Gastrocnemius medialis (tissue), 4 donors: ENCODE measurements at regions of chr2 and their contacts with region 1.

Region 1: GRCh38 chr2:170815746-170816503 is 762 bp upstream of the GAD1 start:
- DNase-seq: no peak
- ATAC-seq: peak in 1 of 2 donors; percentile 32
- H3K4me3 ChIP-seq: peak overlapping the region; percentile 42 to 62 (median 48)
- H3K27ac ChIP-seq: no peak overlapping the region
- H3K4me1 ChIP-seq: peaks cover 54 to 62% of the 10 kb centered on the region in 2 donors
- H3K27me3 ChIP-seq: peaks cover 81 to 82% (median 81%) of the 10 kb centered on the region in 3 donors
- CTCF ChIP-seq: peak; percentile 55 to 82 (median 76)
- POLR2A ChIP-seq: no peak

Region 2: DNA sequence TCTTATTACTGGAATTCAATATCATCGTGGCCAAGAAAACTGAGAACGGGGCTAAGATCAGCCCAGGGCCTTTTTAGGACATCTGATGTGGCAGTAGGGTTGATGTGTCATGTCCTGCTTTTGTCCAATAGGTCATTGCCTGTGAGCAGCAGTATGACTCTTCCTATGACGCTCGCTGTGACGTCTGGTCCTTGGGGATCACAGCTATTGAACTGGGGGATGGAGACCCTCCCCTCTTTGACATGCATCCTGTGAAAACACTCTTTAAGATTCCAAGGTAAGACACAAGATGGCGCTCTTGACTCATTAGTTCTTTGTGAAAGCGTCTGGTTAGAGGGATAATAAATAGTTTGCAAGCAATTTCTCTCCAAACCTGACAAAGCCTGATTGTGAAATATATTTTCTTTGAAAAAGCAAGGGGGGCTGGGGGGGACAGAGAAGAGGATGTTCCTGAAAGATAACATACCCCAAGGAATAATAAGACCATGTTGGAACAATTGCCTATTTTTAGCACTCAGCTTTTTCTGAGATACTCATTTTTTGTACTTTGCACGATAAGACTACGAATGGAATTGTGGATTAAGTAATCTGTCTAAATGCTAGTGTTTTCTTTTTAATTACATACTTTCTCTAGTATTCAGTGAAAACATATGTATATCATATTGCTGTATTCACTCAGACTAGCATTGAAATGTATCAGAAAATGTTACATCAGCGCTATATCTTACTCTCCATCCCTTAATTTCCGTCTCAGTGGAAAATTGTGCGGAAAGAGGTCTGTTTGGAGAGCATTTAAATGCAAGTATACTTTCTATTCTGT is 579.9 kb before region 1 on chr2:
- in situ Hi-C with region 1: loop called in 2 of 4 experiments (anchors 10 to 25 kb)
- intact Hi-C with region 1: loop called (anchors 1 kb)
- DNase-seq: no peak
- ATAC-seq: peak in 1 of 2 donors; percentile 54
- H3K4me3 ChIP-seq: no peak overlapping the region
- H3K27ac ChIP-seq: no peak overlapping the region
- H3K4me1 ChIP-seq: no peaks in the 10 kb centered on the region
- H3K27me3 ChIP-seq: peaks cover 0 to 5% (median 3%) of the 10 kb centered on the region in 3 donors
- CTCF ChIP-seq: peak in 3 of 5 experiments; percentile 50 to 55 (median 52)
- POLR2A ChIP-seq: no peak

Region 3: DNA sequence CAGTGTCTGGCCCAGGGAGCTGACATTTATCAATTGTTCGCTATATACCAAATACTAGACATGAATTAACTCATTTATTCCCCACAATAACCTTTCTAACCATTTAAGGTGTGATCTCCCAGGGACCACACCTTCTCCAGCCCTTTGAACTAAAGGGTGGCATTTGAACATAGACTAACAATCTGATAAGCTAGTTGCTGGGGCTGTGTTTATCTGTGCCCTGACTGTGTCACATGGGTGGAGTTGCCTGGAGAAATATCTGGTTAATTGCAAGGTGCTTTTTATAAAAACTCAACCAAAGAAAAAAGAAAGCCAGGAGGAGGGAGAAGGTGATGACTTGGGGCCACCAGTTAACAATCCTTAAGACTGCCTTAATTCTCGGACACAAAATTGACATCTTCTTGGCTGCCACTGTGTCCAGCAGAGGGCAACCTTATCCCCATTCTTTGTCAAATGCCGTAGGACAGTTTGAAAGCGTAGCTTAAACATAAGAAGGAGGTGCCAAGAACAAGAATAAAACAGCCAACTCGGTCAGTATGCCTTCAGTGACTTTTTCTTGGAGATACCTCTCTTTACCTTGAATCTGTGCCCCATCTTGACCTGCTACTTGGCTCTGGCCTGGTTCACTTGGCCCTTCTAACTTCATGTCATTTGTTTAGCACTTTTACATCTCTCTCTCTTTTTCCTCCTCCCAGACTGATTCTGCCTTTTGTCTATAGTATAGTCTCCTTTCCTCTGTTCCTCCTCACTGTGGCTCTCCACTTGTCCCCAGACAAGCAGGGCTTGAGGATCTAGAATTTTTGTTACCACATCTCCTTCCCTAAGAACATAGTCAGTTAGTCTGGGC is 454.6 kb before region 1 on chr2:
- in situ Hi-C with region 1: loop called in 1 of 4 experiments (anchors 10 kb)
- intact Hi-C with region 1: loop called (anchors 5 kb)
- DNase-seq: peak in 1 of 2 donors; percentile 6
- ATAC-seq: peak; percentile 47 to 53
- H3K4me3 ChIP-seq: no peak overlapping the region
- H3K27ac ChIP-seq: no peak overlapping the region
- H3K4me1 ChIP-seq: no peaks in the 10 kb centered on the region
- H3K27me3 ChIP-seq: peaks cover 0 to 3% (median 0%) of the 10 kb centered on the region in 3 donors
- CTCF ChIP-seq: peak in 4 of 5 experiments; percentile 10 to 60 (median 46)
- POLR2A ChIP-seq: no peak

Region 4: DNA sequence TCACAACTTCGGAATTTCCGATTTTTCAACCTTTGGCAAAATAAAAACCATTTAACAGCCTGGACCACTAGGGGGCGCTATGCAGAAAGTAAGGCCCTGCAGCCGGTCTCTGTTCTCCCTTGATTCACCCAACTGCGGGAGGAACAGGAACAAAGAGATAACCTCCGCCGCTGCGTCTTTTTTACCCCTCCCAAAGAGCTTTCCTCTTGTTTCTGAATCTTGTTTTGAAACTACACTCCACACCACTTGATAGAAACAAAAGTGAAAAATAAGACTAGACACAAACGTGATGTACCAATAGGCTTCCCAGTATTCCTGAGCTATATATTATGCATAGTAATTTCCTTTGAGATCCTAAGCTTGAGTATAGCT is 406.8 kb before region 1 on chr2:
- in situ Hi-C with region 1: loop called in 2 of 4 experiments (anchors 25 kb)
- intact Hi-C with region 1: loop called (anchors 1 kb)
- DNase-seq: peak; percentile 24 to 38
- ATAC-seq: peak in 1 of 2 donors; percentile 53
- H3K4me3 ChIP-seq: peak overlapping the region in 1 of 4 donors; percentile 18
- H3K27ac ChIP-seq: no peak overlapping the region
- H3K4me1 ChIP-seq: no peaks in the 10 kb centered on the region
- H3K27me3 ChIP-seq: peaks cover 0 to 2% (median 0%) of the 10 kb centered on the region in 3 donors
- CTCF ChIP-seq: peak; percentile 70 to 82 (median 77)
- POLR2A ChIP-seq: no peak

Region 5: DNA sequence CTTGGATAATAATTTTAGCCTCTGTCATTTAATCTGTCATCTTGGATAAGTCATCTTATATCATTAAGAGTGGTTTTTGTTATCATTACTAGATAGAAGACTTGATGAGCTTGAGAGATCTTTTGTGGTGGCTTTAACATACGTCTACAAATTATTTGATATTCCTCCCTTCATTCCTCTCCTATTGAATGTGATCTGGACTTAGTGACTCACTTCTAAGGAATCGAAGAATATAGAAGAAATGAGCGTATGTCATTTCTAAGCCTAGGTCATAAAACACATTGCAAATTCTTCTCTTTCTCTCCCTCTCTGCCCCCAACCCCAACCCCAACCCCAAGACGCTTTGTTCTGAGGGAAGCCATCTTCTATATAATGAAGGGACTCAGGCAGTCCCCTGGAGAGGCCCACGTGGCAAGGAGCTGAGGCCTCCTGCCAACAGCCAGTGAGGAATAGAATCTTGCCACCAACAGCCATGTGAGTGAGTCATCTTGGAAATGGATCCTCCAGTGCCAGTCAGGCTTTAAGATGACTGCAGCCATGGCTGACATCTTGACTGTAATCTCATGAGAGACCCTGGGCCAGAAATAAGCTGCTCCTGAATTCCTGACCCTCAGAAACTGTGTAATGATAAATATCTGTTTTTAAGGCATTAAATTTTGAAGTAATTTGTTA is 322.4 kb before region 1 on chr2:
- in situ Hi-C with region 1: loop called in 2 of 4 experiments (anchors 5 to 25 kb)
- intact Hi-C with region 1: no loop called
- DNase-seq: peak; percentile 21 to 22
- ATAC-seq: peak; percentile 66 to 69
- H3K4me3 ChIP-seq: no peak overlapping the region
- H3K27ac ChIP-seq: no peak overlapping the region
- H3K4me1 ChIP-seq: no peaks in the 10 kb centered on the region
- H3K27me3 ChIP-seq: no peaks in the 10 kb centered on the region
- CTCF ChIP-seq: no peak
- POLR2A ChIP-seq: no peak

Region 6: DNA sequence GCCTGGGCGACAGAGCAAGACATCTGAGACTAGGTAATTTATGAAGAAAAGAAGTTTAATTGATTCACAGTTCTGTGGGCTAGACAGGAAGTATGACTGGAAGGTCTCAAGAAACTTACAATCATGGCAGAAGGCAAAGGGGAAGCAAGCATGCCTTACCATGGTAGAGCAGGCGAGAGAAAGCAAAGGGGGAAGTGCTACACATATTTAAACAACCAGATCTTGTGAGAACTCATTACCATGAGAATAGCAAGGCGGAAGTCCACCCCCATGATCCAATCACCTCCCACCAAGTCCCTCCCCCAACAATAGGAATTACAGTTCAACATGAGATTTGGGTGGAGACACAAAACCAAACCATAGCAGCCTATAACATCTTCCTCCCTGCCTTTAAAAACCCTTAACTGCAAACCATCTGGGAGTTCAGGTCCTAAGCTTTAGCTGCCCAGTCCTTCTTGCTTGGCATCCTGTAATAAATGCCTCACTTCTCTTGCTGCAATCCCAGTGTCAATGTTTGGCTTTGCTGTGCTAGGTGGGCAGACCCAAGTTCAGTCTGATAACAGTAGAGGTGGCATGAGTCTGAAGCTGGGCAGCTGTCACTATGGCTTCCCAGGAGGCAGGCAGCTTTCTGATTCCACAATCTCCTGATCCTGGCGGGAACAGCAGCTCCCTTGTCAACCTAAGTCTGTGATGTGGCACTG is 112.0 kb before region 1 on chr2:
- in situ Hi-C with region 1: no loop called
- intact Hi-C with region 1: no loop called
- DNase-seq: no peak
- ATAC-seq: no peak
- H3K4me3 ChIP-seq: no peak overlapping the region
- H3K27ac ChIP-seq: no peak overlapping the region
- H3K4me1 ChIP-seq: no peaks in the 10 kb centered on the region
- H3K27me3 ChIP-seq: peaks cover 0 to 17% (median 3%) of the 10 kb centered on the region in 3 donors
- CTCF ChIP-seq: no peak
- POLR2A ChIP-seq: no peak

Region 7: DNA sequence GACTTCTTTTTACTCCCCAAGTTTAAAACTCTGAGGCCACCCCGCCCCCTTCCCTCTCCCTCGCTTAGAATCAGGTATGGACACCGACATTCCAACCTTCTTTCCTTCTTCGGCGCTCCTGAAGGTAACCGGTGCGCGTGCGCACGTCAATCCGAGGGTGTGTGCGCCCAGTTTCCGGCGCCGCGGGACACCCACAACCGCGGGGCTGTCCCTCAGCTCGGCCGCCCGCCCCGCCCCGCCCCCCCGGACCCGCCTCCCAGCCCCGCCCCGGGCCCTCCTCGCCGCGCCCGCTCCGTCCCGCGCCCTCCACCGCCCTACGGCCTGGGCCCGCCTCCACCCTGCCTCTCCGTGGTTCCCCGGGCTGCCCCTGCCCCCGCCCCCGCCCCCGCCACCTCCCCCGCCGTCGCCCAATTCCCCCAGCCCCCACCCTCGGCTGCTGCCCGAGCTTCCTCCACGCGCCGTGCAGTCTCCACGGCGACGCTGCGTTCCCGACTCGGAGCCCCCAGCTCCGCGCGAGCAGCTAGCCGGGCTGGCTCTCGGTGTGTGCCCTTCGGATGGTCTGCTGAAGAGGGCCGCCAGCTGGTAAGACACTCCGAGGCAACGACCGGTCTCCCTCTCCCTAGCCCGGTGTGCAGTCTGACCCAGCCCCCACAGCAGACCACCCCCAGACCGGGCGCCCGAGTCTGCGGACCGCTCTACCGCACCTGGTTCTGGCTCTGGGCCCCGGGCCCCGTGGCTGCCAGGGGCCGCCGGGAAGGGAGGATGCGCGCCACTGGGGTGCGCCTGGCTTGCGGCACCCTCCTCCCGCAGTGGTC is 45.1 kb before region 1 on chr2:
- in situ Hi-C with region 1: no loop called
- intact Hi-C with region 1: loop called (anchors 2 kb)
- DNase-seq: peak; percentile 50 to 52
- ATAC-seq: peak; percentile 78 to 79
- H3K4me3 ChIP-seq: peak overlapping the region; percentile 71 to 81 (median 77)
- H3K27ac ChIP-seq: peak overlapping the region; percentile 54 to 69 (median 60)
- H3K4me1 ChIP-seq: peaks cover 0 to 6% of the 10 kb centered on the region in 2 donors
- H3K27me3 ChIP-seq: no peaks in the 10 kb centered on the region
- CTCF ChIP-seq: no peak
- POLR2A ChIP-seq: peak in 1 of 2 donors; percentile 28